RWPE1 (cell line): ENCODE measurements at regions of chr6 and their contacts with region 1.

Region 1: DNA sequence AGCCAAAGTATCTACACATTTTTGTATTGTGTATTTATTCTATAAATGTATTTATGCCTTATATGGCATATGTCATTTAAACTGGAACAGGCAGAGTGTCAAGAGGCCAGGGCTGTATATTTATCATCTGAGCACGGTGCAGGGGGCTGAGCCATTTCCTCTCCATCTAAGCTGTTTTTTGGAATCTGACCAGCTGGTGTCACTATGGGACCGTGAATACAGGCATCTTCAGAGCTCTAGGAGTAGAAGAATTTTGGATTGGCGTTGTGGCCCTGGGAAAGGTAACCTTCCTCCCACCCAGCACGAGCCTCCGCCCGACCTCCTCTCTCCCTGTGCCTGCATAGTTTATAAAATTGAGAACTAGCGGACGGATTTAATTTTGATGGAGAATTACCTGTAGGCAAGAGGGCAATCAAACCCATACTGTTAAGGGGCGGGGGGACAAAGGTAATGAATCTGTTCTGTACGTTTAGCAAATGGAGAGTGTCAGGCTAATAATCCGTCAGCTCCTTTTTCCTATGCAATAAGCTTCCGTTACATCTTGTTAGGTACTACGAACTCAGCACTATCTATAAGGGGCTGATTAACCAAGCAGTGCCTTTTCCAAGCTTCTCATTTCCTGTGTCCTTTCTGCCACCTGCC is 29.0 kb upstream of the EEF1E1 start:
- DNase-seq: peak; percentile 63
- H3K27ac ChIP-seq: no peak overlapping the region
- CTCF ChIP-seq: peak; percentile 34

Region 2: DNA sequence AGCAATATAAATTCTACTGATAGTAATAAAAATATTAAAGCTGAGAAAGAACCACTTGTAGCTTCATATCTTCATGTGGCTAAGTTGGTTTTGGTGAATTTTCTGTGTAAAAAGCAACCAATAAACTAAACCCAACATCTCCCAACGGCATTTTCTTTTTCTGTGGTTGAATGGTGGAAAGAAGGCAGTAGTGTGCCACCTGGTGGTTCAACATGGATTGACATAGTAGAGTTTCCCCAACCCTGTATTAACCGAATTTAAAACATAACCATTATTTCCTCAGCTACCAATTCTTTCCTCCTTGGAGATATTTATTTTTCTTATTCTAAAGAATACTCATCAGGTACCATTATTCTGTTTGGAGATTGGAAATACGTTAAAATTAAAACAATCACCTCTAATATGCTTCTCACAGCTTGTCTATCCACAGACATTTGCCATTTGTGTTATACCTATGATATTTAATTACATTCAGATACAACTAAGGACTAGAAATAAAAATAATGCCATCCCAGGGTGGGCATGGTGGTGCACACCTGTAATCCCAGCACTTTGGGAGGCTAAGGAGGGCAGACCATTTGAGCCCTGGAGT is 88.1 kb after region 1 on chr6:
- CTCF ChIA-PET with region 1: interaction called, 90 read pairs
- POLR2A ChIA-PET with region 1: no interaction called
- DNase-seq: peak; percentile 51
- H3K27ac ChIP-seq: no peak overlapping the region
- CTCF ChIP-seq: peak; percentile 76